Upper lobe of right lung (tissue), 1 donor: ENCODE measurements at regions of chrX and their contacts with region 1.

Region 1: DNA sequence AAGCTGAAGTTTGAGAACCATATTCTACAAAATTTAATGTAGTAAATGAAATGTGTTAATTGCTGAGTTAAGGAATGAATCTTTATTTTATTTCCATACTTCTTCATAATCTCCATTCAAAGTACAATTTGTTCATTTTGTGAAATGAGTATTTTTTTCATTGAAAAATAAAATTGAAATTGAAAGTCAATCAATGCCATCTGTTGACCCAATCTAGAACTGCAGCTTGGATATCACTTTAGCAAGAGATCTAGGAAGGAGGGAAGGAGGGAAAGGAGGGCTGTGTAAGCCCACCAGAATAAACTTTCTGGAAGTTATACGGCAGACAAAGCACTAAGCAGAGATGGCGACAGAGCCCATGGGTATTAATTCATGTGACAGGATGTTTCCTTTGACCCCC is 128.4 kb downstream of the ZMAT1 start:
- DNase-seq: no peak
- ATAC-seq: no peak
- H3K4me3 ChIP-seq: no peak overlapping the region
- H3K27ac ChIP-seq: no peak overlapping the region
- H3K4me1 ChIP-seq: no peaks in the 10 kb centered on the region
- H3K27me3 ChIP-seq: no peaks in the 10 kb centered on the region
- CTCF ChIP-seq: peak; percentile 48

Region 2: DNA sequence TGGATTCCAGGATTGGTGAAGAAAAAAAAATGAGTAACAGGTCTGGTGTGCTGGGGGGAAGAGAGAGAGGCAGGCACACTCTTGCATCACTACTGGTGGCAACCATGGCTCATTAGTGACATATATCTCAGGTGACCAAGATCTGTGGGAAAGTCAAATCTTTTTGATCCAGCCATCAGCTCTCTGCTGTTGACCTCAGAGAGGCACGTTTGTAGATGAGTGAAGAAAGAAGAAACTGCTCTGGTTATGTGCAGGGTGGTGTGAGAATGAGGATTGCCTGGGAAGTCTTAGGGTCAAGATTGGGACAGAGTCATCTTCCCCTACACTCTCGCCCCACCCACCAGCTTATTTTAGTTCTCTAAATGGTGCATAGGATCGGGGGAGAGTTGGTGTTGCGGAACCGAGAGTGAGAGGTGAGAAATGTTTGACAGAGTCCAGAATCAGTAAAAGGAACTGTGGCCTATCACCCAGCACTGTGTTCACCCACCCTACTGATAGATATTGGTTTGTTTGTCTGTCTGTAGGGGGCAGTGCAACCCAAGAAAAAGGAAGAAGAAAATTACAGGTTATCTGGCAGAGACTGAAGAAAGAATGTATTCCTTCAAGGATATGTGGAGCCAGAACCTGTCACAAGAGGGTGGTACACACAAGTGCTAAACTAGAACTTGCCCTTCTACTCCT is 207.6 kb before region 1 on chrX:
- intact Hi-C with region 1: loop called (anchors 10 kb)
- DNase-seq: no peak
- ATAC-seq: peak; percentile 90
- H3K4me3 ChIP-seq: no peak overlapping the region
- H3K27ac ChIP-seq: no peak overlapping the region
- H3K4me1 ChIP-seq: no peaks in the 10 kb centered on the region
- H3K27me3 ChIP-seq: no peaks in the 10 kb centered on the region
- CTCF ChIP-seq: peak; percentile 59